ENCODE measurements at regions of chr1 and their contacts with region 1.

Region 1: GRCh38 chr1:90721210-90722194 is 4.4 kb upstream of the BARHL2 start:
- DNase-seq: peak; percentile 83
- ATAC-seq: peak; percentile 65
- H3K4me3 ChIP-seq: no peak overlapping the region
- H3K27ac ChIP-seq: no peak overlapping the region
- H3K4me1 ChIP-seq: 0 out of 2 replicates have a peak, but pooled peaks cover 7% of the 10 kb centered on the region
- H3K27me3 ChIP-seq: peaks cover 24% of the 10 kb centered on the region
- CTCF ChIP-seq: peak; percentile 86

Region 2: GRCh38 chr1:89754518-89754917 is 967.0 kb before region 1 on chr1:
- CTCF ChIA-PET with region 1: no interaction called
- POLR2A ChIA-PET with region 1: no interaction called
- intact Hi-C with region 1: no loop called
- DNase-seq: no peak
- ATAC-seq: no peak
- H3K4me3 ChIP-seq: no peak overlapping the region
- H3K27ac ChIP-seq: no peak overlapping the region
- H3K4me1 ChIP-seq: no peaks in the 10 kb centered on the region
- H3K27me3 ChIP-seq: no peaks in the 10 kb centered on the region
- CTCF ChIP-seq: no peak

Region 3: DNA sequence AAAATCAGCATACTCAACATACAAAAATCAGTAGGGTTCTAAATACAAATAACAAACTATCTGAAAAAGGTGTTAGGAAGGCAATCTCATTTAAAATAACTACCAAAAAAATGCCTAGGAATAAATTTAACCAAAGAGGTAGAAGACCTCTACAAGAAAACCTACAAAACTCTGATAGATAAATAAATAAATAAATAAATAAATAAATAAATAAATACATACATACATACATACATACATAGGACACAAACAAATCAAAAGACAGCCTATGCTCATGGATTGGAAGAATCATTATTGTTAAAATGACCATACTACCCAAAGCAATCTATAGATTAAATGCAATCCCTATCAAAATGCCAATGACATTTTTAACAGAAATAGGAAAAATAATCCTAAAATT is 199.1 kb before region 1 on chr1:
- CTCF ChIA-PET with region 1: no interaction called
- POLR2A ChIA-PET with region 1: no interaction called
- intact Hi-C with region 1: no loop called
- DNase-seq: no peak
- ATAC-seq: no peak
- H3K4me3 ChIP-seq: no peak overlapping the region
- H3K27ac ChIP-seq: no peak overlapping the region
- H3K4me1 ChIP-seq: no peaks in the 10 kb centered on the region
- H3K27me3 ChIP-seq: 0 out of 2 replicates have a peak, but pooled peaks cover 4% of the 10 kb centered on the region
- CTCF ChIP-seq: no peak

Region 4: DNA sequence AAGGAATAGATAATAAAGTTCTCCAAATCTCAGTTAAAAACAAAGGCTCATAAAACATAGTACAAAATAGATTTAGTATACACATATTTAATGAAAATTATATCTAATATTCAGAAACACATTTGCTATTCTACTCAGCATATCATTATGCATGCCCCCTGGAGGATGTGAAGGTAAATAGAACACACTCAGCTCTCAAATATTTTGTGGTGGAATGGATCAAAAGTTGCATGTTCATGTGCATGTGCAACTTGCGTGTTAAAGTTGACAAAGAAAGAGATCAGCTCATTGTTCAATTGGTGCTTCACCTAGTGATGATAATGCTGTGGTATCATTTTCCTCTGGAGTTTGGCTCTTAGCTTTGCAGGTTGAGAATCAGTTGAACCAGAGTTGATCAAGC is 305.3 kb after region 1 on chr1:
- CTCF ChIA-PET with region 1: interaction called, 5 read pairs
- POLR2A ChIA-PET with region 1: no interaction called
- intact Hi-C with region 1: loop called (anchors 2 kb)
- DNase-seq: peak; percentile 70
- ATAC-seq: no peak
- H3K4me3 ChIP-seq: no peak overlapping the region
- H3K27ac ChIP-seq: no peak overlapping the region
- H3K4me1 ChIP-seq: peaks cover 18% of the 10 kb centered on the region
- H3K27me3 ChIP-seq: peaks cover 8% of the 10 kb centered on the region; the same call in 1 of the 2 replicates
- CTCF ChIP-seq: peak; percentile 46; the same call in 1 of the 2 replicates

Region 5: DNA sequence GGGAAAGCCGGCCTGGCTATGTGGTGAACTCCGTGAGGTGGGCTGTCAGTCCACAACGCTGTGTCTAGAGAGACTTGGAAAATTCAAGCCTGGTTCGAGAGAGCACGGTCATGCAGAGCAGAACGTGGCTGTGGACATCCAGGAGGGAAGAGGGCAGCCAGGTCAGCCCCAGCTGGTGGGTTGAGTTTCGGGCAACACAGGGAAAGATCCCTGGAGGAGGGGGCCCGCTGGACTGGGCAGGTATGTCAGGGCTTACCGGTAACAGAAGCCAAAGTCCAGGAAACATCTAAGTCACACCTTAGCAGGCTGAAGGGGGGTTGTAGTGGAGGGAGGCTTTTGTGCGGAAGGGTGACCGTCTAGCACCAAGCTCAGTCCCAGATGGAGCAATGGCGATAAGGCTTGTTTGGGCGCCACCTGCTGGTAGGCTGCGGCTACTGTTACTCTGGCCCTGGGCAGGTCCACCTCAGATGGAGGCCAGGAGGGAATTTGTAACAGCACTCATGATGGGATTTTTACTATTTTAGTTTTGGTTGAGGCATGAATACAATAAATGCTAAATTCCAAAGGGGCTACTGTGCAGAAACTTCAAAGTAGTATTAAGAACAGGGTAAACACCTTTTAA is 443.6 kb after region 1 on chr1:
- CTCF ChIA-PET with region 1: interaction called, 17 read pairs
- POLR2A ChIA-PET with region 1: no interaction called
- intact Hi-C with region 1: loop called (anchors 5 kb)
- DNase-seq: peak; percentile 75
- ATAC-seq: peak; percentile 95
- H3K4me3 ChIP-seq: no peak overlapping the region
- H3K27ac ChIP-seq: no peak overlapping the region
- H3K4me1 ChIP-seq: no peaks in the 10 kb centered on the region
- H3K27me3 ChIP-seq: 0 out of 2 replicates have a peak, but pooled peaks cover 8% of the 10 kb centered on the region
- CTCF ChIP-seq: peak; percentile 94